ENCODE measurements at regions of chr22 and their contacts with region 1.

Region 1: GRCh38 chr22:28951969-28952521 is 68.7 kb downstream of the ZNRF3 start:
- DNase-seq: no peak
- ATAC-seq: peak; percentile 66
- H3K4me3 ChIP-seq: no peak overlapping the region
- H3K27ac ChIP-seq: peak overlapping the region in 1 of 2 donors; percentile 55
- H3K4me1 ChIP-seq: no peaks in the 10 kb centered on the region
- H3K27me3 ChIP-seq: no peaks in the 10 kb centered on the region

Region 2: GRCh38 chr22:28882878-28883656 is 69.0 kb before region 1 on chr22 and contains the start of gene ZNRF3:
- intact Hi-C with region 1: loop called in 1 of 2 experiments (anchors 5 kb)
- DNase-seq: peak; percentile 93 to 97
- ATAC-seq: peak; percentile 99
- H3K4me3 ChIP-seq: peak within 1 kb of the TSS; percentile 77 to 85
- H3K27ac ChIP-seq: peak within 1 kb of the TSS; percentile 39
- H3K4me1 ChIP-seq: no peaks in the 10 kb centered on the region
- H3K27me3 ChIP-seq: no peaks in the 10 kb centered on the region
- total RNA-seq, gene ZNRF3: 7.2 to 11.8 TPM

Region 3: DNA sequence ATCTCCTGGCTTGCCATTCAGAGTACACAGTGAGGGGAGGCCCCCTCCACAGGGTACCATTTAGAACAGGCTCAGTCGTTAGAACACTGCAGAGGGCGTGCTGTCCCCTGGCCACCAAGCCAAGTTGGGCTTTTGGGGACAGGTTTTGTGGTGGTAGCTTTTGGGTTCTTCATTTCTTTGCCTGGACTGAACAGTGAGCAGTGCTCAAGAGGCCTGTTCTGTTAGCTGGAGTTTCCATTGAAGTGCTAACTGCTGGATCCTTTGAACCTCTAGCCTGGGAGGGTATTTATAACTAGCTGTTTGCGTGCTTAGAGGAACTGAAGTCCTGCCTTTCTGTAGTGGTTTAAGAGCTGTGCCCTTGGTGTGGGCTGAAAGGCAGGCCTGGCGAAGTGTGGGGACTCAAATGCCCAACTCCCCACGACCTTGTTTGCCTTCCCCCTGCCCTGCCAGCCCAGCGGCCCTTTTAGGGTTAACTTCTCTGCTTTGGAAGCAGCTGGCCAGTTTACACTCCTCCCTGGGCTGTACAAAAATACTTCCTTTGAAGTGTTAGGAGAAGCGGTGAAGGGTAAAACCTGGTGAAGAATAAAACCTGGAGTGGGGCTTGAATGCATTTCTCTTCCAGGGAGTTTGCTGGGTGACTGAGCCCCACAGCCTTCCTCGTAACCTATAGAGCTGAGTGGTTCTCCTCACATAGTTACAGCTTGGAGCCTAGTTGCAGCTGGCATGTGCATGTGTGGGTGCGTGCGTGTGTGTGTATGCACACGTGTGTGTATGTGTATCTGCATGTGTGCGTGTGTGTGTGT is 34.1 kb before region 1 on chr22:
- intact Hi-C with region 1: loop called in 1 of 2 experiments (anchors 5 kb)
- DNase-seq: peak in 1 of 2 donors; percentile 41
- ATAC-seq: peak; percentile 53
- H3K4me3 ChIP-seq: no peak overlapping the region
- H3K27ac ChIP-seq: peak overlapping the region; percentile 22 to 84
- H3K4me1 ChIP-seq: peaks cover 3 to 12% of the 10 kb centered on the region in 2 donors
- H3K27me3 ChIP-seq: no peaks in the 10 kb centered on the region

Region 4: DNA sequence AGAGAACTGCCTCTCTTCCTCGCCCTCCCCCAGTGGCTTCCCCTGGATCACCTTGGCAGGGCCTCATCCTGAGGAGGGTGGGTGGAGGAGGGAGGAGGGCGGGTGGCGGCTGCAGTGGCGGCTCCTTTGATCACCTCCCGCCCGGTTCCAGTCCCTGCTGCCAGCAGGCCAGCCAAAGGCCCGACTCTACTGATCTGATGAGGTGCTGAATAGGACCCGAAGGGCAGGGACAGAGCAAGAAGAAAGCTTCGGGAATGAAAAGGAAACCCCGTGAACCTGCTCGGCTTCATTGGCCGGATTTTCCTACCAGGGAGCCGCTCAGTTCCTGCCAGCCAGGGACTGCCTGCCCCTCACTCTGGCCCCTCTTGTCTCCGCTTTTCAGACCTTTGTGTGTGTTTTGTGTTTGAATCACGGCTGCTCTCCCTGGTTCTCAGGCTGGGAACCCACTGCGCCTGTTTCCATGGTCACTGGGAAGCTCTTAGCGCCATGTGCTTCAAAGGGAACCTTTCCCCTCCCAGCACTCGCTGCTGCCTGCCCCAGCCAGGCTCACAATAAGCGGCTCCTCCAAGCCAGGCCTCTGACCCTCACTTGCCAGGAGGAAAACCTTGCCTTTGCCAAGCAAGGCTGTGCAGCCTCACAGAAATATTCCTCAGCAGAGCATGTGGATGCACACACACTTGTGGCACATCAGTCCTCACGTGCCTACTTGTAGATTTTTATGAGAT is 52.8 kb after region 1 on chr22:
- intact Hi-C with region 1: no loop called
- DNase-seq: peak in 1 of 2 donors; percentile 60
- ATAC-seq: peak; percentile 36
- H3K4me3 ChIP-seq: no peak overlapping the region
- H3K27ac ChIP-seq: peak overlapping the region in 1 of 2 donors; percentile 3
- H3K4me1 ChIP-seq: no peaks in the 10 kb centered on the region
- H3K27me3 ChIP-seq: no peaks in the 10 kb centered on the region